Esophagus muscularis mucosa (tissue), 4 donors: ENCODE measurements at regions of chr13 and their contacts with region 1.

Region 1: DNA sequence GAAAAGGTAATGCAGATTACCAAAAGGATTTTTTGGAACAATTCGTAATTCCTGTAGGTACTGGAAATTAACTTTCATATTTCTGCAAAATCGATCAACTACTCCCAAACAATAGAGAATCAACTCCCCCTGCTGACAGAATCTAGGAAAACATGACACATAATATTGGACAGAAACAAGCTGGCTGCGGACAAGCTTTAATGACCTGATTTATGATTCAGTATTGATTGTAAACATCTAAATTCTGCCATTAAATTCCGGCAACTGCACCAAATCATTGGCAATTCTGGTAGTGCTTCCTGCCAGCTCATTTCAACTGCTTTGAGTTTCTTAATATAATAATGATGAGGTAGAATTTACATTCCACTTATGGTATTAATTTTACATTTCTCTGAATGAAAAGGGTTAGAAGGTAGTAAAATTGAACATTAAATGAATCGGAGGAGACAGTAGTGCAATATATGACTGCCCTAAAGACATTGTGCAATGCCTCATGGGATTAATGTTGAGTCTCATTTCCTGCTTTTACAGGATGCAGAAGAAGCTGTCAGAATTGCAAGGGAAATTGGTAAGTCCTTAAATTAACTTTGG is 146.5 kb downstream of the PCCA start:
- DNase-seq: no peak
- H3K4me3 ChIP-seq: no peak overlapping the region
- H3K27ac ChIP-seq: no peak overlapping the region
- H3K4me1 ChIP-seq: peaks cover 8 to 22% (median 15%) of the 10 kb centered on the region in 4 donors
- H3K27me3 ChIP-seq: no peaks in the 10 kb centered on the region
- CTCF ChIP-seq: peak; percentile 34 to 53 (median 50)
- EP300 ChIP-seq: no peak
- POLR2A ChIP-seq: no peak

Region 2: GRCh38 chr13:99656092-99656745 is 579.2 kb before region 1 on chr13:
- intact Hi-C with region 1: loop called (anchors 5 kb)
- DNase-seq: peak; percentile 94
- H3K4me3 ChIP-seq: peak overlapping the region in 1 of 4 donors; percentile 9
- H3K27ac ChIP-seq: no peak overlapping the region
- H3K4me1 ChIP-seq: peaks cover 9 to 30% (median 27%) of the 10 kb centered on the region in 4 donors
- H3K27me3 ChIP-seq: no peaks in the 10 kb centered on the region
- CTCF ChIP-seq: peak; percentile 85 to 93 (median 92)
- EP300 ChIP-seq: no peak
- POLR2A ChIP-seq: no peak

Region 3: GRCh38 chr13:99916366-99917103 is 318.9 kb before region 1 on chr13:
- intact Hi-C with region 1: loop called (anchors 5 kb)
- DNase-seq: no peak
- H3K4me3 ChIP-seq: no peak overlapping the region
- H3K27ac ChIP-seq: no peak overlapping the region
- H3K4me1 ChIP-seq: no peaks in the 10 kb centered on the region
- H3K27me3 ChIP-seq: peaks cover 0 to 47% (median 8%) of the 10 kb centered on the region in 4 donors
- CTCF ChIP-seq: peak; percentile 68 to 76 (median 73)
- EP300 ChIP-seq: no peak
- POLR2A ChIP-seq: no peak

Region 4: GRCh38 chr13:100088644-100089464 is 146.6 kb before region 1 on chr13 and contains the start of gene PCCA:
- intact Hi-C with region 1: loop called (anchors 10 kb)
- DNase-seq: peak; percentile 98
- H3K4me3 ChIP-seq: peak within 1 kb of the TSS; percentile 81 to 96 (median 87)
- H3K27ac ChIP-seq: peak within 1 kb of the TSS; percentile 81 to 91 (median 83)
- H3K4me1 ChIP-seq: peaks cover 16 to 47% (median 31%) of the 10 kb centered on the region in 4 donors
- H3K27me3 ChIP-seq: no peaks in the 10 kb centered on the region
- CTCF ChIP-seq: no peak
- EP300 ChIP-seq: no peak
- POLR2A ChIP-seq: no peak
- total RNA-seq, gene PCCA: 33.8 to 40.3 (median 39.0) TPM

Region 5: DNA sequence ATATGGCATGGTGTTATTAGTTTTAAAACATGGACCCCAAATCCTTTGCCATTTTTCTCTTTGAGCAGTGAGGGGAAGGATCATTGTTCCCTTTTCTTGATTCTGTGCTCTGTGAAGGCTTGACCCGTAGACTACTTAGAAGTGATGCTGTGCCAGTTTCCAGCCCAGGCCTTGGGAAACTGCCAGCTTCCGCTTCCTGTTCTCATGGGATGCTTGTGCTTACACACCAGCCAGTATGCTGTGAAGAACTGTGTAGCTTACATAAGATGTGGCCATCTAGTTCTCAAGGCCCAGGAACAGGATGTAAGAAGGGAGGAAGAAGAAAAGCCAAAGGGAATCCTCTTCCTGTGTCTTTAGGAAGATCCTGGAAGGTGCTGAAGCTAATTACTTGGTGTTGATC is 34.4 kb after region 1 on chr13:
- intact Hi-C with region 1: no loop called
- DNase-seq: no peak
- H3K4me3 ChIP-seq: no peak overlapping the region
- H3K27ac ChIP-seq: no peak overlapping the region
- H3K4me1 ChIP-seq: no peaks in the 10 kb centered on the region
- H3K27me3 ChIP-seq: no peaks in the 10 kb centered on the region
- CTCF ChIP-seq: no peak
- EP300 ChIP-seq: no peak
- POLR2A ChIP-seq: no peak

Region 6: GRCh38 chr13:100514788-100515409 is 279.5 kb after region 1 on chr13:
- intact Hi-C with region 1: loop called (anchors 10 kb)
- DNase-seq: no peak
- H3K4me3 ChIP-seq: no peak overlapping the region
- H3K27ac ChIP-seq: no peak overlapping the region
- H3K4me1 ChIP-seq: peaks cover 0 to 12% (median 4%) of the 10 kb centered on the region in 4 donors
- H3K27me3 ChIP-seq: no peaks in the 10 kb centered on the region
- CTCF ChIP-seq: peak; percentile 79 to 90 (median 80)
- EP300 ChIP-seq: no peak
- POLR2A ChIP-seq: no peak